T-cell (primary cell): ENCODE measurements at regions of chr12 and their contacts with region 1.

Region 1: GRCh38 chr12:47247433-47247832 is 167.7 kb upstream of the AMIGO2 start:
- DNase-seq: no peak
- ATAC-seq: no peak
- H3K4me3 ChIP-seq: no peak overlapping the region
- H3K4me3 Mint-ChIP-seq: no peak overlapping the region
- H3K27ac ChIP-seq: no peak overlapping the region
- H3K27ac Mint-ChIP-seq: no peak overlapping the region
- H3K4me1 ChIP-seq: peaks cover 2 to 9% of the 10 kb centered on the region in 2 experiments
- H3K4me1 Mint-ChIP-seq: peaks cover 2 to 5% (median 3%) of the 10 kb centered on the region in 3 donors
- H3K27me3 ChIP-seq: no peaks in the 10 kb centered on the region
- H3K27me3 Mint-ChIP-seq: no peaks in the 10 kb centered on the region

Region 2: GRCh38 chr12:47190271-47190750 is 57.1 kb before region 1 on chr12:
- CTCF ChIA-PET with region 1: no interaction called
- POLR2A ChIA-PET with region 1: no interaction called
- DNase-seq: no peak
- ATAC-seq: no peak
- H3K4me3 ChIP-seq: no peak overlapping the region
- H3K4me3 Mint-ChIP-seq: peak overlapping the region in 2 of 3 donors; percentile 34 to 74
- H3K27ac ChIP-seq: peak overlapping the region; percentile 67
- H3K27ac Mint-ChIP-seq: peak overlapping the region; percentile 91 to 99
- H3K4me1 ChIP-seq: peaks cover 41 to 60% of the 10 kb centered on the region in 2 experiments
- H3K4me1 Mint-ChIP-seq: peaks cover 86 to 92% (median 90%) of the 10 kb centered on the region in 3 donors
- H3K27me3 ChIP-seq: no peaks in the 10 kb centered on the region
- H3K27me3 Mint-ChIP-seq: no peaks in the 10 kb centered on the region

Region 3: DNA sequence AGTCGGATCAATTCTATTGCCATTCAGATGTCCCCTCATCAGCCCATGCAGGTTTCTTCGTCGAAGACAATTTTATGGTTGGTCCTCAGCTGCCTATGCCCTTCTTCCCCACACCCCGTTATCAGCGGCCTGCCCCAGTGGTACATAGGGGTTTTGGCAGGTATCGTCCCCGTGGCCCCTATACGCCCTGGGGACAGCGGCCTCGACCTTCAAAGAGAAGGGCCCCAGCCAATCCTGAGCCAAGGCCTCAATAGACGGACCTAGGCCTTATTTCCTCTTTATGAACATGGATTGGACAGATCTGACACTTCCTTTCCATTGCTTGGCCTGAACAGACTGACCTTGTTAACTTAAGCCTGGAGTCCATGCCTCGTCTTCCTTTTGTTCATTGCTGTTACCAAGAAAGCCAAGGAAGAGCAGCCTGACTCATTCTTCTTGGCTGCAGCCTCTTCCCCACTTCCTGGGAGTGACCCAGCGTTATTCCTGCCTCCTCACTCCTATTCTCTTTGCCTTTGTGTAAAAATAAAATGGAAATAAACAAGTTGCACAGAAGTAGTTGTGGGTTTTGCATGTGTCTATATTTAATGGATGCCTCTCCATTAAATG is 11.2 kb before region 1 on chr12:
- CTCF ChIA-PET with region 1: no interaction called
- POLR2A ChIA-PET with region 1: interaction called in 1 of 2 experiments, 12 read pairs
- DNase-seq: no peak
- ATAC-seq: no peak
- H3K4me3 ChIP-seq: no peak overlapping the region
- H3K4me3 Mint-ChIP-seq: peak overlapping the region in 1 of 3 donors; percentile 45
- H3K27ac ChIP-seq: no peak overlapping the region
- H3K27ac Mint-ChIP-seq: peak overlapping the region; percentile 79 to 90
- H3K4me1 ChIP-seq: peaks cover 22 to 33% of the 10 kb centered on the region in 2 experiments
- H3K4me1 Mint-ChIP-seq: peaks cover 52 to 62% (median 61%) of the 10 kb centered on the region in 3 donors
- H3K27me3 ChIP-seq: no peaks in the 10 kb centered on the region
- H3K27me3 Mint-ChIP-seq: no peaks in the 10 kb centered on the region

Region 4: GRCh38 chr12:47812797-47813510 is 565.5 kb after region 1 on chr12:
- CTCF ChIA-PET with region 1: no interaction called
- POLR2A ChIA-PET with region 1: no interaction called
- DNase-seq: peak; percentile 77 to 94 (median 89)
- ATAC-seq: peak; percentile 77 to 79 (median 79)
- H3K4me3 ChIP-seq: peak overlapping the region; percentile 59 to 70
- H3K4me3 Mint-ChIP-seq: peak overlapping the region; percentile 73 to 97 (median 80)
- H3K27ac ChIP-seq: peak overlapping the region; percentile 95
- H3K27ac Mint-ChIP-seq: peak overlapping the region; percentile 90 to 99
- H3K4me1 ChIP-seq: peaks cover 71 to 99% of the 10 kb centered on the region in 2 experiments
- H3K4me1 Mint-ChIP-seq: peaks cover 91 to 97% (median 96%) of the 10 kb centered on the region in 3 donors
- H3K27me3 ChIP-seq: no peaks in the 10 kb centered on the region
- H3K27me3 Mint-ChIP-seq: no peaks in the 10 kb centered on the region